Activated CD4-positive, alpha-beta T cell treated with anti-CD3 and anti-CD28 coated beads for 36 hours (primary cell): ENCODE measurements at regions of chr14 and their contacts with region 1.

Region 1: DNA sequence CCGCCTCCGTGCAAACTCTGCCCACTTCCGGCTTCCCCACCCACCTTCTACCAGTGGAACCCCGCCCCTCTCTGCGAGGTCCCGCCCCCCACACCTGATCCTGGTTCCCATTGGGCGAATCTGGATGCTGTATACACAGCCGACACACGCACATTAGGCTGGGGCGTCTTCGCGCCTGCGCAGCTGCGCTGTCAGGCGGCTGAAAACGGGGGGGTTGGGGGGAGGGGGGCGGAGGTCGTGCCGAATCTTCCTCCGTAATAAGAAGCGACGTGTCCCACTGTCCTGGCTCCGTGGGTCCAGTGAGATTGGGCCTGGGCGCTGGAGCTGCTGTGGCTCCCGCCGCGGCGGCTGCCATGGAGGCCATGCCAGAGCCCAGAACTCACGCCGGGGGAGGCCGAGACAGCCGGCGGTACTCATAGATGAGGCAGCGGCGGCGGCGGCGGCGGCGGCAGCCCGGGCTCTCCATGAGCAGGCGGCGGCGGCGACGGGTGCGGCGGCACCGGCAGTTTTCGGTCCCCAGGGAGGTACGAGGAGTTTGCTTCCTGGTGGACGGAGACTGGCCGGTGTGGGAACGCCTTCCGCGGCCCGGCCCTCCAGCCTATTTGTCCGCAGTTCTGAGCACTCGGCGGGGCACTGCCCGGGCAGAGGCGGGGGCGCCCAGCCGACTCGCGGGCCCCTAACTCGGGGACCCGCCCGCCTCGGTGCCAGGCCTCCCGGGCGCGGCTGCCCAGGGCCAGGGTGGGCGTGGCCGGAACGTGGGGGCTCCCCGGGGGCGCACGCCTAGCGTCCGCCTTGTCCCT is 64.5 kb downstream of the KLHL28 start:
- DNase-seq: peak; percentile 99
- ATAC-seq: peak; percentile 99
- H3K4me3 Mint-ChIP-seq: peak overlapping the region; percentile 82
- H3K27ac Mint-ChIP-seq: peak overlapping the region; percentile 90
- H3K4me1 Mint-ChIP-seq: peaks cover 13% of the 10 kb centered on the region
- H3K27me3 Mint-ChIP-seq: no peaks in the 10 kb centered on the region

Region 2: DNA sequence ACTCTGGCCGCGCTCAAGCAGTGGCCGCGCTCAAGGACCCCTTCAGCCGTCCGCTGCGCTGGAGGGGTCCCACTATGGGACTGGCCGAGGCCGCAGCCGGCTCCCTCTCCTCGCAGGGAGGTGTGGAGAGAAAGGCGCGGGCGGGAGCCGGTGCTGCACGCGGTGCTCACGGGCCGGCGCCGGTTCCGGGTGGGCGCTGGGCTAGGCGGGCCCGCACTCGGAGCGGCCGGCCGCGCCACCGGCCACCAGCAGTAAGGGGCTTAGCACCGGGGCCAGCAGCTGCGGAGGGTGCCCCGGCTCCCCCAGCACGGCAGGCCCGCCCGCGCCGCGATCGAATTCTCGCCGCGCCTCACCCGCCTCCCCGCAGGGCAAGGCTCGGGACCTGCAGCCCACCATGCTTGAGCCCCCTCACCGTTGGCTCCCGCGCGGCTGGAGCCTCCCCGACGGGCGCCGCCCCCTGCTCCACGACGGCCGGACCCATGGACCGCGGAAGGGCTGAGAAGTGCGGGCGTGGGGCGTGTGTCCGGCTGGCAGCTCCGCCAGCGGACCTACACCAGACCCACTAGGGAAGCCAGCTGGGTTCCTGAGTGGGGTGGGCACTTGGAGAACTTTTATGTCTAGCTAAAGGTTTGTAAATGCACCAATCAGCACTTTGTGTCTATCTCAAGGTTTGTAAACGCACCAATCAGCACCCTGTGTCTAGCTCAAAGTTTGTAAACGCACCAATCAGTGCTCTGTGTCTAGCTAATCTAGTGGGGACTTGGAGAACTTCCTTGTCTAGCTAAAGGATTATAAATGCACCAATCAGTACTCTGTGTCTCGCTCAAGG is 15.0 kb after region 1 on chr14:
- CTCF ChIA-PET with region 1: interaction called, 4 read pairs
- POLR2A ChIA-PET with region 1: no interaction called
- intact Hi-C with region 1: loop called in 1 of 2 experiments (anchors 1 kb)
- DNase-seq: no peak
- ATAC-seq: peak; percentile 12
- H3K4me3 Mint-ChIP-seq: no peak overlapping the region
- H3K27ac Mint-ChIP-seq: no peak overlapping the region
- H3K4me1 Mint-ChIP-seq: no peaks in the 10 kb centered on the region
- H3K27me3 Mint-ChIP-seq: peaks cover 27% of the 10 kb centered on the region

Region 3: DNA sequence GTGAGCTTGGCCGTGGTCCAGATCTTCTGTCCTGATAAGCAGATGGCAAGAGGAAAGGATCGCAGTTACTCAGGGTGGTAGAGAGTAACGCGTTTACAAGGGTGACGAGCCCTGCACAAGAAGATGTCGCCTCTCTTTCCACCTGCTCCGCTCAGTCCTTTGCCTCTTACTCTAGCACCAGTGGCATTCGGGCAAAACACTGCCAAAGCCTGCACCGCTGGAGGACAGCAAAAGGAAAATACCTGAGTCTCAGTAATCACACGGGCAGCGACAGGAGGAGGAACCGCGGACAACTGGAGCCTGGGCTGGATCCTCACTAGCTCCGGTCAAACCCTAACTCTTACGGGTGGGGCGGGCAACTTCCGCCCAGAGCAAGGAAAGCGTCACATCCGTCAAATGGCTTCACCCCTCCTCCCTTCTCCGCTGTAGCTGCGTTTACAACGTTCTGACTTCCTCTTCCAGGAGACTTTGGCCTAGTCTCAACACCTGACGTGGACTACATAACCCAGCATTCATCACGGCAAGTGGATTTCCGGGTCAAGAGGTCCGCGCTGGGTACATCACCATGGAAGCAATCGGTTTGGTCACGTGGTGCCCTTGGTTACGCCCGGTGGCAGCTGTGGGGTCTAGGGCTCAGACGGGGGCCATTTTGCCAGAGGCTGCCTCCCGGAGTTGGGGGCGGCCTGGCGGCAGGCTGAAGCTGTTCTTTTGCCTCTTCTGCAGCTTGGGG is 64.5 kb after region 1 on chr14 and contains the starts of genes KLHL28 and TOGARAM1:
- CTCF ChIA-PET with region 1: interaction called, 3 read pairs
- POLR2A ChIA-PET with region 1: interaction called, 5 read pairs
- intact Hi-C with region 1: loop called (anchors 1 kb)
- DNase-seq: peak; percentile 96
- ATAC-seq: peak; percentile 94
- H3K4me3 Mint-ChIP-seq: no peak within 1 kb of the TSS
- H3K27ac Mint-ChIP-seq: no peak within 1 kb of the TSS
- H3K4me1 Mint-ChIP-seq: peaks cover 51% of the 10 kb centered on the region
- H3K27me3 Mint-ChIP-seq: no peaks in the 10 kb centered on the region
- total RNA-seq, gene KLHL28: 11.3 to 12.3 TPM
- total RNA-seq, gene TOGARAM1: 5.7 to 6.6 TPM

Region 4: DNA sequence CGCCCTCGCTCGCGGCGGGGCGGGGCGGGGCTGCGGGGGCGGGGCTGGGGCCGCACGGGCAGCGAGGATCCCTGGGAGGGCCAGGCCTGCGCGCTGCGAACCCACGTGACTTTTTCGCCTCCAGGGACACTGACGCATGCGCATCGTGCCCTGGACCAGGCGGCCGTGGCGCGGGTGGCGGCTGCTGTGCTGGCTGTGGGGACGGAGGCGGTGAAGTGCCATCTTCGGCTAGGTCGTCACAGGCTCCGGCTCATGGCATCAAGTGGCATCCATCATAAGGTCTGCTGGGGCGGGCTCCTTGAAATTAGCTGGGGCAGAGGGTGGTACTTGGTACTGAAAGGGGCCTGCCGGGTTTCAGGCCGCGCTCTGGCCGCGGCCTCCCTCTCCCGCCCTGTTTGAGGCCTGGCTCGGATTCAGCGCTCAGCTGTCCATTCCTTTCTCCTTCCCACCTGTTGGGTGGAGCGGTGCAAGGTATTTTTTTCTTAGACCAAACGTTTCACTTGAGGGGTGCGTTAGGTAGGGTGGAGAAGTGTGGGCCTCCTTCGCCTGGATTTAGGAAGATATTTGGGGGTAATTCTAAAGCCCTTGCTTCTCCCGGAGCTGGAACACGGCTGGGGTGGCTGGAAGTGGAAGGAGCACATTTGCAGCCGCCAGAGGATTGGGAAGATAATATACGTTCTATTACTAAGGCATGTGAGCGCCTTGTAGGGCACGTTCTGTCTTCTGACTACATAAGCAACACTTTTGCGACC is 186.9 kb after region 1 on chr14 and contains the start of gene PRPF39:
- CTCF ChIA-PET with region 1: no interaction called
- POLR2A ChIA-PET with region 1: no interaction called
- intact Hi-C with region 1: loop called (anchors 1 kb)
- DNase-seq: peak; percentile 97
- ATAC-seq: peak; percentile 96
- H3K4me3 Mint-ChIP-seq: peak within 1 kb of the TSS; percentile 93
- H3K27ac Mint-ChIP-seq: peak within 1 kb of the TSS; percentile 97
- H3K4me1 Mint-ChIP-seq: peaks cover 45% of the 10 kb centered on the region
- H3K27me3 Mint-ChIP-seq: no peaks in the 10 kb centered on the region
- total RNA-seq, gene PRPF39: 45.2 to 47.5 TPM